Dorsolateral prefrontal cortex (tissue), 120 donors: ENCODE measurements at regions of chr3 and their contacts with region 1.

Region 1: GRCh38 chr3:32934150-32934742 is 17.2 kb upstream of the CCR4 start:
- DNase-seq: peak in 1 of 10 donors; percentile 15
- H3K4me3 ChIP-seq: no peak overlapping the region
- H3K27ac ChIP-seq: no peak overlapping the region
- H3K27me3 ChIP-seq: no peaks in the 10 kb centered on the region
- CTCF ChIP-seq: peak; percentile 32 to 79 (median 62)

Region 2: GRCh38 chr3:32630266-32630665 is 304.0 kb before region 1 on chr3:
- intact Hi-C with region 1: no loop called
- DNase-seq: no peak
- H3K4me3 ChIP-seq: no peak overlapping the region
- H3K27ac ChIP-seq: no peak overlapping the region
- H3K27me3 ChIP-seq: no peaks in the 10 kb centered on the region
- CTCF ChIP-seq: no peak

Region 3: GRCh38 chr3:32733631-32734229 is 200.5 kb before region 1 on chr3:
- intact Hi-C with region 1: loop called in 1 of 2 experiments (anchors 5 kb)
- DNase-seq: no peak
- H3K4me3 ChIP-seq: no peak overlapping the region
- H3K27ac ChIP-seq: no peak overlapping the region
- H3K27me3 ChIP-seq: no peaks in the 10 kb centered on the region
- CTCF ChIP-seq: peak; percentile 37 to 80 (median 63)